HCT116 (cell line): ENCODE measurements at regions of chr6 and their contacts with region 1.

Region 1: GRCh38 chr6:30483677-30484279 is 5.5 kb upstream of the HLA-E start:
- DNase-seq: peak; percentile 54
- ATAC-seq: peak; percentile 33; the same call in 1 of the 2 replicates
- H3K4me3 ChIP-seq: no peak overlapping the region
- H3K27ac ChIP-seq: no peak overlapping the region
- H3K4me1 ChIP-seq: peaks cover 0 to 7% of the 10 kb centered on the region in 2 experiments; a peak in 1 of 4 replicates
- H3K27me3 ChIP-seq: no peaks in the 10 kb centered on the region
- CTCF ChIP-seq: peak; percentile 43 to 88 (median 73)
- POLR2A ChIP-seq: no peak
- RAD21 ChIP-seq: peak; percentile 85

Region 2: GRCh38 chr6:29617782-29618557 is 865.8 kb before region 1 on chr6:
- CTCF ChIA-PET with region 1: no interaction called
- POLR2A ChIA-PET with region 1: no interaction called
- RAD21 ChIA-PET with region 1: no interaction called
- intact Hi-C with region 1: no loop called
- DNase-seq: no peak
- ATAC-seq: peak; percentile 89
- H3K4me3 ChIP-seq: no peak overlapping the region
- H3K27ac ChIP-seq: no peak overlapping the region
- H3K4me1 ChIP-seq: no peaks in the 10 kb centered on the region
- H3K27me3 ChIP-seq: no peaks in the 10 kb centered on the region
- CTCF ChIP-seq: peak; percentile 50 to 66 (median 63); a peak in 5 of 6 replicates
- POLR2A ChIP-seq: no peak
- RAD21 ChIP-seq: peak; percentile 10; the same call in 1 of the 2 replicates

Region 3: DNA sequence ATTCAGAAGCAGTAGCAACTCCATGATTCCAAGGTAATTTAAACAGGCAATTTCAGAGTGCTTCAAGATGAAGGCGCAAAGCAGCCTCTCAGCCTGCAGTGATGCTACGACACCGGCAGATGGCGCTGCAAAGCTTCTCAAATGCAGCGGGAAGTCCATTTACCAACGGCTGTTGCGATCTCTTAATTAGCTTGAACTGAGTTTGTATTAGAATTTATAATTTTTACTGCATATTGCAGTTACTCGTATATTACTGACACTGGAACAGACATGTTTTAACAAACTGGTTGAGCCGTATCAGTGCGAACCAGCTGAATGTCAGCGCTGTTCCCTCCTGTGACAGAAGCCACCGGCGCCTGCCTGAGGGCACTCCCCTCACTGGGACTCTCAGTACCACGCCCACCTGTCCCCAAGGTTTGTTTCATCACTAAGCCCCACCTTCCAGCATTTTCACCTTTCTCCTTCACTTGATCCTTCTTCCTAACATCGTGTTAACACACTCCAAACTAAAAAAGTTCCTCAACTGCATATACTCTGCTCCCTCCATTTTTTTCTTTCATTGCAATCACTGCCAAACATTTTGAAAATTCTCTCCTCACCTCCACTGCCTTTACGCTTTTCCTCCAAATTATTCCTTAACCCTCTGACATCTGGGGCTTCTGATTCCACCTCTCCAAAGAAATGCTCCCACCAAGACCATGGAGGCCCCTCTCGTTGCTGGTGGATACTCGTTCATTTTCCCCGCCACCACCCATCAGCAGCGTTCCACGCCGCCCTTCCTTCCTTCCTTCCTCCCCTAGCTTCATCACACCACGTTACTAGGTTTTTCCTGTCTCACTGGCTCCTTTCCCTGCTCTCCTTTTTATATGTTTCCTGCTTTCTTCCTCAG is 58.0 kb after region 1 on chr6:
- CTCF ChIA-PET with region 1: interaction called, 28 read pairs
- POLR2A ChIA-PET with region 1: no interaction called
- RAD21 ChIA-PET with region 1: interaction called, 4 read pairs
- intact Hi-C with region 1: loop called (anchors 1 kb)
- DNase-seq: peak; percentile 83
- ATAC-seq: peak; percentile 92
- H3K4me3 ChIP-seq: peak overlapping the region; percentile 36 to 47
- H3K27ac ChIP-seq: no peak overlapping the region
- H3K4me1 ChIP-seq: peaks cover 0 to 10% of the 10 kb centered on the region in 2 experiments; a peak in 2 of 4 replicates
- H3K27me3 ChIP-seq: no peaks in the 10 kb centered on the region
- CTCF ChIP-seq: peak; percentile 84 to 99 (median 97)
- POLR2A ChIP-seq: no peak
- RAD21 ChIP-seq: peak; percentile 78

Region 4: GRCh38 chr6:30600451-30600961 is 116.7 kb after region 1 on chr6:
- CTCF ChIA-PET with region 1: interaction called, 21 read pairs
- POLR2A ChIA-PET with region 1: interaction called, 4 read pairs
- RAD21 ChIA-PET with region 1: interaction called, 3 read pairs
- intact Hi-C with region 1: loop called (anchors 1 kb)
- DNase-seq: no peak
- ATAC-seq: no peak
- H3K4me3 ChIP-seq: no peak overlapping the region
- H3K27ac ChIP-seq: no peak overlapping the region
- H3K4me1 ChIP-seq: peaks cover 0 to 12% of the 10 kb centered on the region in 2 experiments; a peak in 2 of 4 replicates
- H3K27me3 ChIP-seq: no peaks in the 10 kb centered on the region
- CTCF ChIP-seq: no peak
- POLR2A ChIP-seq: no peak
- RAD21 ChIP-seq: no peak

Region 5: GRCh38 chr6:30672445-30673253 is 188.9 kb after region 1 on chr6 and contains the start of gene DHX16:
- CTCF ChIA-PET with region 1: interaction called, 4 read pairs
- POLR2A ChIA-PET with region 1: no interaction called
- RAD21 ChIA-PET with region 1: no interaction called
- intact Hi-C with region 1: loop called (anchors 2 kb)
- DNase-seq: peak; percentile 99
- ATAC-seq: peak; percentile 85
- H3K4me3 ChIP-seq: peak within 1 kb of the TSS; percentile 98
- H3K27ac ChIP-seq: peak within 1 kb of the TSS; percentile 57
- H3K4me1 ChIP-seq: peaks cover 4 to 22% of the 10 kb centered on the region in 2 experiments; a peak in 3 of 4 replicates
- H3K27me3 ChIP-seq: no peaks in the 10 kb centered on the region
- CTCF ChIP-seq: peak; percentile 84 to 92 (median 88)
- POLR2A ChIP-seq: peak; percentile 42
- RAD21 ChIP-seq: peak; percentile 80
- total RNA-seq, gene DHX16: 46.0 TPM

Region 6: DNA sequence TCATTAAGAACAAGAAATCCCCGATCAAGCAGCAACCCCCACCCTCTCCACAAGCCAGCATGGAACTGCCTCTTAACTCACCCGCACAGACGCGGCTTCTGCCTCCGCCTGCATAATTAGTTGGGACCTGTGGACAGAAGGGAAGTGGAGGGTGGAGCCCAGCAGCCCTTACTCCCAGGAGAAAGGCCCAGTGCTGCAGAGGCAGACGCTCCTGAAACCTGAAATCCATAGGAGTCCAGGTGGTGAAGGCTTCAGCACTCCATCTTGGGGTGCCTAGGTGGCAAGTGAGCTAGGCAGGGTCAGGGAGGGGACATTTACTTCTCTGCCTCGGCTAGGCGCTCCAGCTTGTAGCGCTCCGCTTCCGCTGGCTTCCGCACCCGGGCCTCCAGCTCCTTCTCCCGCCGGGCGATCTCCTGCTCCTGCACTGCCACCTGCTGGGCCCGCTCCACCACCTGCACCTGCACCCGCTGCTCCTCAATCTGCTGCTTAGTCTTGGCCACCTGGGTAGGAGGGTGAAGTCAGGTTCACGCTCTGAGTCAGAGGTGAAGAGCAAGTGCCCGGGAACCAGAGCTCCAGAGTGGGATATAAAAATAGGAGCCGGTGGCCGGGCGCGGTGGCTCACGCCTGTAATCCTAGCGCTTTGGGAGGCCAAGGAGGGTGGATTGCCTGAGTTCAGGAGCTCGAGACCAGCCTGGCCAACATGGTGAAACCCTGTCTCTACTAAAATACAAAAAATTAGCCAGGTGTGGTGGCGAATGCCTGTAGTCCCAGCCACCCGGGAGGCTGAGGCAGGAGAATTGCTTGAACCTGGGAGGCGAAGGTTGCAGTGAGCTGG is 247.0 kb after region 1 on chr6:
- CTCF ChIA-PET with region 1: interaction called, 31 read pairs
- POLR2A ChIA-PET with region 1: no interaction called
- RAD21 ChIA-PET with region 1: interaction called in 1 of 2 experiments, 5 read pairs
- intact Hi-C with region 1: no loop called
- DNase-seq: peak; percentile 77
- ATAC-seq: peak; percentile 90
- H3K4me3 ChIP-seq: peak overlapping the region; percentile 41 to 53
- H3K27ac ChIP-seq: peak overlapping the region; percentile 55
- H3K4me1 ChIP-seq: peaks cover 12 to 37% of the 10 kb centered on the region in 2 experiments
- H3K27me3 ChIP-seq: no peaks in the 10 kb centered on the region
- CTCF ChIP-seq: peak; percentile 86 to 91 (median 88)
- POLR2A ChIP-seq: no peak
- RAD21 ChIP-seq: peak; percentile 98

Region 7: DNA sequence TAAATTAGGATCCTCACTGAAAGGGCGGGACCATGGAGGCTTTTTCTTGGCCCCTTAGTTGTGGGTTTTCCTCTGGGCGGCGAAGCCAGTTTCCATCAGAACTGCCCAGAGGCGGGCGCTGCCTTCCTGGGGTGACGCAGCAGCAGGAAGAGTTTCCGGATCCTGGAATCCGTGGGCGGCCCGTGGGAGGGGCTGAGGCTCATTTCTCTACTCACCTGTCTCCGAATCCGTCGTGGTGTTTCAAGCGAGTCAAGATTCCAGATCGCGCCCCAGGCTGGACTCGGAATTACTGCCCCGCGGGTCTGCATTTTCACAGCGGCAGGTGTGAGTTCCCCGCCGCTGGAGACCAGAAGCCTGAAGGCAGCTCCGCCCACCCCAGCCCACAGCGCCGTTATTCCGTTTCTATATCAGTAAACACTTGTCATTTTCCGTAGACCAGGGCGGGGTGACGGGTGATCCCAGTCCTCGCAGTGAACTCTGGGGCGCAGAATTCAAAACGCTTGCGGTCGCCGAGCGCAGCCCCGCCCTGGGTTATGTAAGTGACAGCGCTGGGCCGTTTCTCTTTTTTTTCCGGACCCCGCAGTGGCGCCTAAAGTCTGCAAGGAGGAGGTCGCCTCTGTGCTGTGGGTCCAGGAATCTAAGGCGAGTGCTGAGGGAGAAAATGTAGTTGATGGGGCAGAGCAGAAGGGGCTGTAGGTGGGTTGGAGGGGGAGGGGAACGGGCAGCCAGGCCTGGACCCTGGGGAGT is 714.0 kb after region 1 on chr6:
- CTCF ChIA-PET with region 1: no interaction called
- POLR2A ChIA-PET with region 1: no interaction called
- RAD21 ChIA-PET with region 1: no interaction called
- intact Hi-C with region 1: loop called (anchors 5 kb)
- DNase-seq: peak; percentile 66
- ATAC-seq: peak; percentile 81
- H3K4me3 ChIP-seq: peak overlapping the region; percentile 79 to 88
- H3K27ac ChIP-seq: peak overlapping the region; percentile 95
- H3K4me1 ChIP-seq: peaks cover 12 to 30% of the 10 kb centered on the region in 2 experiments
- H3K27me3 ChIP-seq: no peaks in the 10 kb centered on the region
- CTCF ChIP-seq: no peak
- POLR2A ChIP-seq: peak; percentile 38
- RAD21 ChIP-seq: 0 out of 2 replicates have a peak, but pooled peaks have one; percentile 5